ENCODE measurements at regions of chr7 and their contacts with region 1.

Region 1: GRCh38 chr7:26365077-26365900 is 73.6 kb downstream of the SNX10 start:
- DNase-seq: peak; percentile 51
- ATAC-seq: peak; percentile 84
- H3K4me3 ChIP-seq: no peak overlapping the region
- H3K27ac ChIP-seq: no peak overlapping the region
- H3K4me1 ChIP-seq: no peaks in the 10 kb centered on the region
- H3K27me3 ChIP-seq: no peaks in the 10 kb centered on the region
- CTCF ChIP-seq: peak; percentile 50 to 93 (median 74)
- POLR2A ChIP-seq: no peak
- RAD21 ChIP-seq: peak; percentile 98

Region 2: GRCh38 chr7:26078437-26079336 is 286.6 kb before region 1 on chr7:
- CTCF ChIA-PET with region 1: interaction called, 7 read pairs
- POLR2A ChIA-PET with region 1: no interaction called
- RAD21 ChIA-PET with region 1: interaction called in 1 of 2 experiments, 3 read pairs
- intact Hi-C with region 1: loop called (anchors 5 kb)
- DNase-seq: peak; percentile 41
- ATAC-seq: peak; percentile 100
- H3K4me3 ChIP-seq: peak overlapping the region; percentile 16 to 43
- H3K27ac ChIP-seq: no peak overlapping the region
- H3K4me1 ChIP-seq: peaks cover 2 to 19% of the 10 kb centered on the region in 2 experiments; a peak in 3 of 4 replicates
- H3K27me3 ChIP-seq: no peaks in the 10 kb centered on the region
- CTCF ChIP-seq: peak; percentile 58 to 68 (median 65)
- POLR2A ChIP-seq: no peak
- RAD21 ChIP-seq: peak; percentile 76

Region 3: GRCh38 chr7:26187380-26188205 is 177.7 kb before region 1 on chr7:
- CTCF ChIA-PET with region 1: no interaction called
- POLR2A ChIA-PET with region 1: no interaction called
- RAD21 ChIA-PET with region 1: no interaction called
- intact Hi-C with region 1: no loop called
- DNase-seq: no peak
- ATAC-seq: peak; percentile 43
- H3K4me3 ChIP-seq: no peak overlapping the region
- H3K27ac ChIP-seq: no peak overlapping the region; the same call in none of the 2 replicates
- H3K4me1 ChIP-seq: no peaks in the 10 kb centered on the region
- H3K27me3 ChIP-seq: no peaks in the 10 kb centered on the region
- CTCF ChIP-seq: no peak
- POLR2A ChIP-seq: no peak
- RAD21 ChIP-seq: no peak

Region 4: DNA sequence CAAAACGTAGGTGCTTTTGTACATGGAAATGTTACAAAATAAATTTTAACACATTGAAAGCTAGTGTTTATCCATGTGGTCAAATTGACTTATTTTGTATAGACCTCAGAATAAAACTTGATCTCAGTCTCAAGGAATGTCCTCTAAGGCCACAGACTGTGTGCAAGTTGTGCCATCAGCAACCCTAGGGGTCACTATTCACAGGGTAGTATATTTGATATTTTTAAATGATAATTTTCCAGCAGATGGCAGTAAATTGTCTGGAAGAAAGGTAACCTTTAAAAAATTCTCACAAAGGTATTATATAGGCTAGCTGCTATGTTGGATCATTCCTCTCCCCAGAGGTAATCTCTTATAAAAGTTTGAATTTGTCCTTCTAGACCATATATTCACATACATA is 86.5 kb before region 1 on chr7:
- CTCF ChIA-PET with region 1: interaction called, 5 read pairs
- POLR2A ChIA-PET with region 1: no interaction called
- RAD21 ChIA-PET with region 1: no interaction called
- intact Hi-C with region 1: loop called (anchors 1 kb)
- DNase-seq: peak; percentile 36
- ATAC-seq: peak; percentile 90
- H3K4me3 ChIP-seq: no peak overlapping the region
- H3K27ac ChIP-seq: no peak overlapping the region
- H3K4me1 ChIP-seq: no peaks in the 10 kb centered on the region
- H3K27me3 ChIP-seq: no peaks in the 10 kb centered on the region
- CTCF ChIP-seq: peak; percentile 60 to 98 (median 64)
- POLR2A ChIP-seq: no peak
- RAD21 ChIP-seq: peak; percentile 62

Region 5: DNA sequence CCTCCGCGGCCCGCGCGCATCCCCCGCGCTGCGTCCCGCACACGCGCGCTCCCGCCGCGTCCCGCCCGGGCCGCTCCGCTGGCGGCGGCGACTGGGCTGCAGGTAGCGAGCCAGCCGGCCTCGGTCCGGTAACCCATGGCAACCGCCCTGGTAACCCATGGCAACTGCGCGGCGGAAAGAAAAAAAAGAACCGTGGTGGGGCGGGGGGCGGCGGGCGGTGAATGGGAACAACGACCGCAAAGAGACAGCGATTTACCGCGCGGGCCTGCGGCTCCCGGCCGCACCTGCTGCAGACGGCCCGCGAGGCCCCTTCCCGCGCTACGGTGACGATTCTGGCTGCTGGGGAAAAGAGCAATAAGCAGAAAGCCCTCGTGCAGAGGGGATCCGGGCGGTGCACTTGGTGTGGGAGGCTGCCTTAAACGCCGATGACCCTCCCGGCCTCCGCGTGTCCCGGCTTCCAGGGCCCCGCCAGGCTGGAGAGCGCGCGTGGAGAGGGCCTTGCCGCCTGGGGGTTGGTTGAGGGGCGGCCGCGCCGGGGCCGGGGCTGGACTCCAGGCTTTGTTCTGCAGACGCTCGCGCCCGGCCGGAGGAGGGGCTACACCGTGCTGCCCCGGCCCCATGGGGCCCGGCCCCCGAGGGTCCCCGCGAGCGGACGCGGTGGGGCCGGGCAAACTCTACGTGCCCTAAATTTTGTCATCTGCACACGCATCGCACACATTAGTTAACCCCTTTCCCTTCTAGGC is 11.1 kb after region 1 on chr7:
- CTCF ChIA-PET with region 1: interaction called, 17 read pairs
- POLR2A ChIA-PET with region 1: no interaction called
- RAD21 ChIA-PET with region 1: interaction called in 1 of 2 experiments, 4 read pairs
- intact Hi-C with region 1: no loop called
- DNase-seq: no peak
- ATAC-seq: peak; percentile 12; the same call in 1 of the 2 replicates
- H3K4me3 ChIP-seq: no peak overlapping the region
- H3K27ac ChIP-seq: no peak overlapping the region
- H3K4me1 ChIP-seq: no peaks in the 10 kb centered on the region
- H3K27me3 ChIP-seq: no peaks in the 10 kb centered on the region
- CTCF ChIP-seq: no peak
- POLR2A ChIP-seq: no peak
- RAD21 ChIP-seq: no peak

Region 6: GRCh38 chr7:26522633-26523032 is 157.3 kb after region 1 on chr7:
- CTCF ChIA-PET with region 1: no interaction called
- POLR2A ChIA-PET with region 1: no interaction called
- RAD21 ChIA-PET with region 1: no interaction called
- intact Hi-C with region 1: no loop called
- DNase-seq: no peak
- ATAC-seq: no peak
- H3K4me3 ChIP-seq: no peak overlapping the region
- H3K27ac ChIP-seq: no peak overlapping the region
- H3K4me1 ChIP-seq: no peaks in the 10 kb centered on the region
- H3K27me3 ChIP-seq: peaks cover 12% of the 10 kb centered on the region; the same call in 1 of the 2 replicates
- CTCF ChIP-seq: no peak
- POLR2A ChIP-seq: no peak
- RAD21 ChIP-seq: no peak

Region 7: DNA sequence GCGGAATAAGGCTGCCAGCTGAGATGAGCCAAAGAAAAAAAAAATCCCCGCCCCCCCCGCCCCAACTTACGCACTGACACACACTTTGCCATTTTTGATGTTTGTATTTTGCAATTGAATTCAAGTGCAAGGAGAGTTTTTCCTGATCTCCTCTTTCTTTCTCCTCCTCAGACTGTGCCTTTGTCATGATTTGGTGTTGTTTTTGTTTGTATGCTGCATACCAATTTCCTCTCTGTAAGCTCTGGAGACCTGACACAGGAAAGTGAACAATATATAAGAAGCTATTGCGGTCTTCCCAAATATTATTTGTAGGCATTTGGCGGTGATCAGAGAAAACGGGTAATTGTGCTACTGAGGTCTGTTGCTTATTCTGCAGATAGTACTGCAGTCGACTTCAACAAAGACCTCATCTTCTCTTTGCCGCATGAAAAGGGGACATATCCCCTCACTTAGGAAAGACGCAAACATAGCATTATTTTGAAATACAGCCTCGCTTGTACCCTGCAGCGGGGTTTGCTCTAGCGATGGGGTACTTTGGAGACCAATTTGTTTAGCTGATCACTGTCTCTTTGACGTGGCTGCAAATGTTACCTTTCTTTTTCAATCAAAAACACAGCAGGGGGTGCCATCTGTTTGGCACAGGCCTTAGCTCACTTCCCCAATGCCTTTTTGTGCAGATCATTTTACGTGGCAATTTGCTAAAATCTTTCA is 292.6 kb after region 1 on chr7:
- CTCF ChIA-PET with region 1: interaction called, 232 read pairs
- POLR2A ChIA-PET with region 1: no interaction called
- RAD21 ChIA-PET with region 1: no interaction called
- intact Hi-C with region 1: no loop called
- DNase-seq: no peak
- ATAC-seq: no peak
- H3K4me3 ChIP-seq: no peak overlapping the region
- H3K27ac ChIP-seq: no peak overlapping the region
- H3K4me1 ChIP-seq: peaks cover 0 to 10% of the 10 kb centered on the region in 2 experiments; a peak in 1 of 4 replicates
- H3K27me3 ChIP-seq: 0 out of 2 replicates have a peak, but pooled peaks cover 4% of the 10 kb centered on the region
- CTCF ChIP-seq: no peak
- POLR2A ChIP-seq: no peak
- RAD21 ChIP-seq: no peak

Region 8: GRCh38 chr7:26686448-26686981 is 321.2 kb after region 1 on chr7:
- CTCF ChIA-PET with region 1: interaction called, 26 read pairs
- POLR2A ChIA-PET with region 1: no interaction called
- RAD21 ChIA-PET with region 1: no interaction called
- intact Hi-C with region 1: no loop called
- DNase-seq: peak; percentile 21
- ATAC-seq: peak; percentile 78
- H3K4me3 ChIP-seq: no peak overlapping the region
- H3K27ac ChIP-seq: no peak overlapping the region
- H3K4me1 ChIP-seq: peaks cover 4 to 11% of the 10 kb centered on the region in 2 experiments; a peak in 3 of 4 replicates
- H3K27me3 ChIP-seq: no peaks in the 10 kb centered on the region
- CTCF ChIP-seq: peak; percentile 53 to 72 (median 66)
- POLR2A ChIP-seq: no peak
- RAD21 ChIP-seq: peak; percentile 71

Measured in HCT116 (cell line).